Activated CD4-positive, alpha-beta T cell treated with anti-CD3 and anti-CD28 coated beads for 36 hours (primary cell): ENCODE measurements at regions of chrX and their contacts with region 1.

Region 1: DNA sequence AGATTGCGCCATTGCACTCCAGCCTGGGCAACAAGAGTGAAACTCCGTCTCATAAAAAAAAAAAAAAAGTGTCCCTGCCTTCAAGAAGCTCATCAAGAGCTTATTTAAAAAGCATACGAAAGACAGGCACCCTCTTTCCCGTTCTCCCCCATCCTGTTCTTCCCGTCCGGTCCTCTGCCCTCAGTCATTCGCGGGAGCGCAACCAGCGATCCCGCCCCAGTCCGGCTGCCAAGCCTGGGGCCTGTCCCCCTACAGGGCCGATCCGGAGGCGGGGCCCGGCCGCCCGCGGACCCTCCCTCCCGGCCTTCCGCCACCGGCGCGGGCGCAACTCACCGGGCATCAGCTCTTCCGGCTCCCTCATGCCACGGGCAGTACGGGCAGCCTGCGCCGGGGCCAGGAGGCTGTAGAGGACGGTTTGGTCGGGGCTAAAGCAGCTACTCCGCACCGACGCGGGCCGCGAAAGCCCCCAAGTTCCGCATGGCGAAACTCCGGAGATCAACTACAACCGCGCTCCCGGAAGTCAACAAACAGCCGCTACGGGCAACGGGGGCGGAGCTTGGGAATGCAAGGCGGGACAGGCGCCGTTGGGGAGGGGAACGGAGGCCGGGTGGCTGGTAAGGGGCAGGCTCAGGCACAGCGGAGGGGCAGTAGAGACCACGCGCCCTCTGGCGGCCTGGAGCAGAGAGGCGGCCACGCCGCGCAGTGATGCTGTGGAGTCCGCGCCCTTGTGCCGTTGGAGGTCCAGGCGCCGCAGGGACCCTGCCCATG is at the start of gene RPGR:
- DNase-seq: peak; percentile 95
- ATAC-seq: peak; percentile 98
- H3K4me3 Mint-ChIP-seq: peak within 1 kb of the TSS; percentile 79
- H3K27ac Mint-ChIP-seq: peak within 1 kb of the TSS; percentile 87
- H3K4me1 Mint-ChIP-seq: peaks cover 20% of the 10 kb centered on the region
- H3K27me3 Mint-ChIP-seq: no peaks in the 10 kb centered on the region
- total RNA-seq, gene RPGR: 6.4 to 7.1 TPM

Region 2: DNA sequence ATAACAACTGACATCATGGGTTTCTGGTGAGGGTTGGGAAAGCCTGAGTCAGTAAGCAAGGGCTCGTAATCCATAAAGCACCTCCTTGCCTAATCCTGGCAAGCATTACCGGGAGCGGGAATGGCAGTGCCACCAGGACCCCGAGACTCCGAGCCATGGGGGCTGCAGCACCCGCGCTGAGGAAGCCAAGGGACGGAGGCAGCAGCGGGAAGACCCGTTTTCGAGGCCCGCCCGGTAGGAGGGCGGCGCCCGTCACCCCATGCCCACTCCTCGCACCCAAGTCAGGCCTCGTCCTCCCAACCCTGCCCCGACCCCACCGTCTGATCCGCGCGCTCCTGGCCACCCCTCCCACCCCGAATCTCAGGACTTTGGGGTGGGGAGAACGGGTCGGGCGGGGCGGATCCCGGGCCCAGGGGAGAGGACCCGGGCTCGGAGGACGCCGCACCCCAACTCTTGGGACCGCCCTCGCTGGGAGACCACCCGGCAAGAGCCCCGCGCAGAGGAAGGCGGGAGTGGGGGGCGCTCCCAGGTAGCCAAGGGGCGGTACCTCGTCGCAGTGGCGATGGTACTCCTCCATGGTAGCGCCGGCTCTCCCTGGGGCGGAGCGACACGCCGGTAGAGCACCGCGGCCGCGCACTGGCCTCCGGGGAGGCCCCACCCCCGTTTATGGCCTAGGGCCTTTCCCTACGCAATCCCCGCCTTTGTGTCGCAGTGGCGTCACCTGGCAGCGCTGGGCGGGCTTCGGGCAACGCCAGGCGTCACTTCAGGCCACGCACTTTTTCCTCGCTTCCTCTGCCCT is 480.1 kb before region 1 on chrX and contains the start of gene DYNLT3:
- CTCF ChIA-PET with region 1: no interaction called
- POLR2A ChIA-PET with region 1: no interaction called
- intact Hi-C with region 1: loop called in 1 of 2 experiments (anchors 10 kb)
- DNase-seq: peak; percentile 88
- ATAC-seq: peak; percentile 93
- H3K4me3 Mint-ChIP-seq: peak within 1 kb of the TSS; percentile 69
- H3K27ac Mint-ChIP-seq: peak within 1 kb of the TSS; percentile 87
- H3K4me1 Mint-ChIP-seq: peaks cover 27% of the 10 kb centered on the region
- H3K27me3 Mint-ChIP-seq: no peaks in the 10 kb centered on the region
- total RNA-seq, gene DYNLT3: 16.1 to 16.8 TPM

Region 3: DNA sequence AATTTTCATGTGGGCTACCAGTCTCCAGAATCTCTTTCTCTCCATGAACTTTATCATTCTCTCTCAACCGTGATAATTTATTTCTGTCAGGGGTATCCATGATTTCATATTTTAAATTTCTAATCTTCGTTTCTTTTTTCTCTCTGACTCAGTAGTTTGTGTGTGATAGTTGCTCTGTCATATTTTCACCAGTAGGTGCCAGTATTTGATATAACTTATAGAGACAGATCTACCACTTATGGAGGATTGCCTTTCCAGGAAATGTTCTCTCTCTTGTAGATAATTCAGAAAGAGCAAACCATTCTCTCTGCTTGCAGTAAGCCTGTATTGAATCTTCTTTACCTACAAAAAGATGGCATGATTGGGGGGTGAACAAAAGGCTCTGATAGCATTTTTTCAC is 400.5 kb before region 1 on chrX:
- CTCF ChIA-PET with region 1: no interaction called
- POLR2A ChIA-PET with region 1: no interaction called
- intact Hi-C with region 1: loop called in 1 of 2 experiments (anchors 5 kb)
- DNase-seq: no peak
- ATAC-seq: peak; percentile 39
- H3K4me3 Mint-ChIP-seq: no peak overlapping the region
- H3K27ac Mint-ChIP-seq: no peak overlapping the region
- H3K4me1 Mint-ChIP-seq: no peaks in the 10 kb centered on the region
- H3K27me3 Mint-ChIP-seq: peaks cover 4% of the 10 kb centered on the region

Region 4: DNA sequence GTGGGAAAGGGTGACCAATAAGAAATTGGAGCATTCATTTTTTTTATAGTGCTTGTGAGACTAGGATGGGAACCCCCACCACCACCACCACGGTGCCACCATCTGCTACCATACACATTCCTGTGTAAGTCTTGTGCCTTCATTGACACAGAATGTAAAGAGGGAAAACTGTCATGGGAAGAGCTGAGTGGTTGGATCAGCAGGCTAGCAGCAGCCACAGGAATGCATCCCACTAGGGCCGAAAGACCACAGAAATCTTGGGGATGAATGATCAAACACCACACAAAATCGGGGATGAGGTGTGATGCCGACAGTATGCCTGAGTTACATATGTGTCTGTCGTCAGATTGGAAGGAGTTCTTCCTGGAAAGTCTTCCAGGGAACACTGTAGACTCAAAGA is 175.8 kb before region 1 on chrX:
- CTCF ChIA-PET with region 1: no interaction called
- POLR2A ChIA-PET with region 1: no interaction called
- intact Hi-C with region 1: no loop called
- DNase-seq: no peak
- ATAC-seq: no peak
- H3K4me3 Mint-ChIP-seq: no peak overlapping the region
- H3K27ac Mint-ChIP-seq: no peak overlapping the region
- H3K4me1 Mint-ChIP-seq: no peaks in the 10 kb centered on the region
- H3K27me3 Mint-ChIP-seq: peaks cover 4% of the 10 kb centered on the region

Region 5: GRCh38 chrX:38220024-38220414 is 107.2 kb before region 1 on chrX:
- CTCF ChIA-PET with region 1: no interaction called
- POLR2A ChIA-PET with region 1: no interaction called
- intact Hi-C with region 1: loop called in 1 of 2 experiments (anchors 1 kb)
- DNase-seq: peak; percentile 41
- ATAC-seq: peak; percentile 36
- H3K4me3 Mint-ChIP-seq: no peak overlapping the region
- H3K27ac Mint-ChIP-seq: no peak overlapping the region
- H3K4me1 Mint-ChIP-seq: peaks cover 2% of the 10 kb centered on the region
- H3K27me3 Mint-ChIP-seq: peaks cover 26% of the 10 kb centered on the region

Region 6: DNA sequence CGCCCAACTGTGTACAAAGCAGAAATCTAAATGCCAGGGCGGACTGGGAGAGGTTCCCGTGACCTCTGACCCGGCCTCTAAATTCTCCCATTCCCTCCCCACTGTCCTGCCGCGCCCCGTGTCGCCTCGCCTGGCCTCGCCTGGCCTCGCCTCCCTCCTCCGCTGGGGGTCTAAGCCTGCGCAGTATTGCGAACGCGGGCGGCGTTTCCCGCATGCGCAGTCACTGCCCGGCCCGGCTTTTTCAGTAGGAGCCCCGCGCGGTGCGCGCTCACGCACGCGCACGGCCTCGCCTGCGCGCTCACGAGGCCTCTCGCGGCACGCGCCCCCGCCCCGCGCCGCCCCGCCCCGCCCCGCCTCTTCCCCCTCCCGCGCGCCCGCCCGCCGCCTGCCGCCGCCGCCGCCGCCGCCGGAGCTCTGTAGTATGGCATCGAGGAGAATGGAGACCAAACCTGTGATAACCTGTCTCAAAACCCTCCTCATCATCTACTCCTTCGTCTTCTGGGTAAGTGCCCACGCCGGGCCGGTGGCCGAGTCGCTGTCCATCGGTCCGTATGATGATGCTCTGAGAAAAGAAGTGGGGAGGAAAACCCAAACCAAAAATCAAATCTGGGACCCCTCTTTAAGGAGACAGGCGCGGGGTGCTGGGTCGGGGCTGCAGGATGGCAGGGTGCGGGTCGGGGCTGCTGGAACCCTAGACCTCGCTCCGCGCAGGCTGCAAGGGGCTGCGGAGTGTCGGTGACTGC is 234.1 kb after region 1 on chrX and contains the start of gene TSPAN7:
- CTCF ChIA-PET with region 1: no interaction called
- POLR2A ChIA-PET with region 1: no interaction called
- intact Hi-C with region 1: loop called in 1 of 2 experiments (anchors 1 kb)
- DNase-seq: peak; percentile 89
- ATAC-seq: peak; percentile 96
- H3K4me3 Mint-ChIP-seq: peak within 1 kb of the TSS; percentile 76
- H3K27ac Mint-ChIP-seq: no peak within 1 kb of the TSS
- H3K4me1 Mint-ChIP-seq: no peaks in the 10 kb centered on the region
- H3K27me3 Mint-ChIP-seq: no peaks in the 10 kb centered on the region
- total RNA-seq, gene TSPAN7: 0.42 to 0.85 TPM

Region 7: GRCh38 chrX:38754102-38754790 is 427.1 kb after region 1 on chrX:
- CTCF ChIA-PET with region 1: no interaction called
- POLR2A ChIA-PET with region 1: no interaction called
- intact Hi-C with region 1: no loop called
- DNase-seq: peak; percentile 41
- ATAC-seq: no peak
- H3K4me3 Mint-ChIP-seq: no peak overlapping the region
- H3K27ac Mint-ChIP-seq: no peak overlapping the region
- H3K4me1 Mint-ChIP-seq: no peaks in the 10 kb centered on the region
- H3K27me3 Mint-ChIP-seq: no peaks in the 10 kb centered on the region